CD4-positive, alpha-beta T cell (primary cell): ENCODE measurements at regions of chr13 and their contacts with region 1.

Region 1: GRCh38 chr13:50053844-50054243 is 38.6 kb downstream of the KCNRG start:
- DNase-seq: no peak
- ATAC-seq: no peak
- H3K4me3 ChIP-seq: no peak overlapping the region
- H3K4me3 Mint-ChIP-seq: no peak overlapping the region
- H3K27ac ChIP-seq: no peak overlapping the region
- H3K27ac Mint-ChIP-seq: no peak overlapping the region
- H3K4me1 ChIP-seq: no peaks in the 10 kb centered on the region
- H3K4me1 Mint-ChIP-seq: peaks cover 8% of the 10 kb centered on the region
- H3K27me3 ChIP-seq: no peaks in the 10 kb centered on the region
- H3K27me3 Mint-ChIP-seq: no peaks in the 10 kb centered on the region
- CTCF ChIP-seq: no peak

Region 2: DNA sequence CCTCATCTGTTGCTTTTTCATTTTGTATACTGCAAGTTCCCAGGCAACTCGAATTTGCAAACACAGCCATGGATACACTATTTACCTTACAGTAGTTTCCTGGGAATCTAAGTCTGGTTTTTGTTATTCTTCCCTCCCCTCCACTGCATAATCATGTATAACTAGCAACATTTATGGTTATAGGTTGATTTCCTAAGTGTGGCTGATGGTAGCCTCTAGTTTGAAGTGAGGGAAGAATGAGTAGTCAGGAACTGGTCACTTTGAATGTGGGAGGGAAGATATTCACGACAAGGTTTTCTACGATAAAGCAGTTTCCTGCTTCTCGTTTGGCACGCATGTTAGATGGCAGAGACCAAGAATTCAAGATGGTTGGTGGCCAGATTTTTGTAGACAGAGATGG is 38.6 kb before region 1 on chr13 and contains the start of gene KCNRG:
- CTCF ChIA-PET with region 1: no interaction called
- POLR2A ChIA-PET with region 1: no interaction called
- intact Hi-C with region 1: loop called in 1 of 2 experiments (anchors 5 kb)
- DNase-seq: no peak
- ATAC-seq: no peak
- H3K4me3 ChIP-seq: no peak within 1 kb of the TSS
- H3K4me3 Mint-ChIP-seq: no peak within 1 kb of the TSS
- H3K27ac ChIP-seq: no peak within 1 kb of the TSS
- H3K27ac Mint-ChIP-seq: peak within 1 kb of the TSS; percentile 64
- H3K4me1 ChIP-seq: peaks cover 2% of the 10 kb centered on the region
- H3K4me1 Mint-ChIP-seq: peaks cover 55% of the 10 kb centered on the region
- H3K27me3 ChIP-seq: no peaks in the 10 kb centered on the region
- H3K27me3 Mint-ChIP-seq: no peaks in the 10 kb centered on the region
- CTCF ChIP-seq: no peak
- total RNA-seq, gene KCNRG: 0.27 to 0.70 TPM

Region 3: DNA sequence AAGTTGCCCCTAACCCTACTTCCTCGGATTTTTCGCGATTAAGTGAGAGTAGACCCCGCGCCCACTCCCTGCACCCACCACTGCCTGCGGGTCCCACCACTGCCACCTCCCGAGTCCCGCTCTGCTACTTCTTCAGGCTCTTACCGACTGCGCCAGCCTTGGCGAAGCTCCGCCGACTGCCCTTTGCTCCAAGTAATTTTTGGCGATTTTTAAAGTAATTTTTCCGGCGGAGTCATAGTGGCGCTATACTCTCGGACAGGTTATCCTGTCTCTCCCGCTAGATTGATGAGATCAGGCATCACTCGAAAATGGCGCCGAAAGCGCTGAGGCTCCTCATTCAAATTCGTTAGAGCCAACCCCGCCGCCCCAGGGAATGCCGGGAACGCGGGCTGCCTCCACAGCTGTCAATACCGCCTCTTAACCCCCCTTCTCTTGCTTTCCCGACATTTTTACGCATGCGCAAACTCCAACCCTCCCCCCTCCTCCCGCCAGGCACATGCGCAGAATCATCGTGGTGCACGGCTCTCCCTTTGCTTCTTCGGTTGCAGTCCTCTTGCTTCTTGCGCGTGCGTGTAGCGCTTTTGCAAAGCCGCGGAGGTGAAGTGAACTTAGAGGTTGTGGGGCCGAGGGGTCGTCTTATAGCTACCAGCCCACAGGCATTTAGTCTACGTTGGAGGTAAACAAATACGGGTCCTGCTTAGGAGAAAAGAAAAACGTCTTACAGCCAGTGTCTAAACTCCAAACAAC is 28.0 kb after region 1 on chr13:
- CTCF ChIA-PET with region 1: no interaction called
- POLR2A ChIA-PET with region 1: no interaction called
- intact Hi-C with region 1: no loop called
- DNase-seq: peak; percentile 97 to 99 (median 98)
- ATAC-seq: peak; percentile 70
- H3K4me3 ChIP-seq: peak overlapping the region; percentile 78
- H3K4me3 Mint-ChIP-seq: peak overlapping the region; percentile 98
- H3K27ac ChIP-seq: peak overlapping the region; percentile 47 to 77
- H3K27ac Mint-ChIP-seq: peak overlapping the region; percentile 91
- H3K4me1 ChIP-seq: peaks cover 27% of the 10 kb centered on the region
- H3K4me1 Mint-ChIP-seq: peaks cover 58% of the 10 kb centered on the region
- H3K27me3 ChIP-seq: no peaks in the 10 kb centered on the region
- H3K27me3 Mint-ChIP-seq: peaks cover 24% of the 10 kb centered on the region
- CTCF ChIP-seq: no peak